Naive thymus-derived CD4-positive, alpha-beta T cell (primary cell): ENCODE measurements at regions of chr20 and their contacts with region 1.

Region 1: DNA sequence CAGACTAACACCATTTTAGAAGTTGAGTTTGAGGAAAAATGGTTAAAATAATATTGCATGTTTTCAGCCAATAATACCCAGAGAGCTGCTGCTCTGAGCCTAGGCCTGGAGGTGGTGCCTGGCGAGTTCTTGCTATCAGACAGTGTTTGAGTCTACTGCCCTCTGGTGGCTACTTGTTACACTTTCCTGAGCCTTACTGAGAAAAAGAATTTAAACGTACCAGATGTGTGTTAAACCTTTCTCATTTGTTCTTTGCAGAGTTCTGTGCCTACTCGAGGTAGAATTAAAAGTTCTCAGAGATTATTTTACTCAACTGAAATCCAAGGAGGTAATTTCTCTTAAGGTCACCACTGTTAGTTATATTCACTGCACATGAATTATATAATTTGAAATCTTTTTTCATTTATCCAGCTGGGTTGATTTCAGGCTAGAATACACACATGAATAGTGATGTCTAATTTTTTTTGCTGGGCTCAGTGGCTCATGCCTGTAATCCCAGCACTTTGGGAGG is 38.2 kb downstream of the SHLD1 start:
- DNase-seq: peak; percentile 21 to 88 (median 83)
- ATAC-seq: peak; percentile 100
- H3K4me3 ChIP-seq: no peak overlapping the region
- H3K4me3 Mint-ChIP-seq: no peak overlapping the region
- H3K27ac ChIP-seq: no peak overlapping the region
- H3K27ac Mint-ChIP-seq: peak overlapping the region in 6 of 9 donors; percentile 8 to 89 (median 68)
- H3K4me1 ChIP-seq: no peaks in the 10 kb centered on the region
- H3K4me1 Mint-ChIP-seq: peaks cover 0 to 22% (median 9%) of the 10 kb centered on the region in 7 donors
- H3K27me3 ChIP-seq: no peaks in the 10 kb centered on the region
- H3K27me3 Mint-ChIP-seq: no peaks in the 10 kb centered on the region

Region 2: GRCh38 chr20:5557123-5557522 is 231.3 kb before region 1 on chr20:
- CTCF ChIA-PET with region 1: interaction called, 26 read pairs
- POLR2A ChIA-PET with region 1: no interaction called
- intact Hi-C with region 1: loop called (anchors 1 kb)
- DNase-seq: peak in 8 of 9 donors; percentile 24 to 63 (median 41)
- ATAC-seq: peak; percentile 77
- H3K4me3 ChIP-seq: no peak overlapping the region
- H3K4me3 Mint-ChIP-seq: no peak overlapping the region
- H3K27ac ChIP-seq: peak overlapping the region; percentile 11
- H3K27ac Mint-ChIP-seq: peak overlapping the region; percentile 1 to 74 (median 25)
- H3K4me1 ChIP-seq: no peaks in the 10 kb centered on the region
- H3K4me1 Mint-ChIP-seq: peaks cover 2 to 35% (median 13%) of the 10 kb centered on the region in 7 donors
- H3K27me3 ChIP-seq: no peaks in the 10 kb centered on the region
- H3K27me3 Mint-ChIP-seq: no peaks in the 10 kb centered on the region

Region 3: DNA sequence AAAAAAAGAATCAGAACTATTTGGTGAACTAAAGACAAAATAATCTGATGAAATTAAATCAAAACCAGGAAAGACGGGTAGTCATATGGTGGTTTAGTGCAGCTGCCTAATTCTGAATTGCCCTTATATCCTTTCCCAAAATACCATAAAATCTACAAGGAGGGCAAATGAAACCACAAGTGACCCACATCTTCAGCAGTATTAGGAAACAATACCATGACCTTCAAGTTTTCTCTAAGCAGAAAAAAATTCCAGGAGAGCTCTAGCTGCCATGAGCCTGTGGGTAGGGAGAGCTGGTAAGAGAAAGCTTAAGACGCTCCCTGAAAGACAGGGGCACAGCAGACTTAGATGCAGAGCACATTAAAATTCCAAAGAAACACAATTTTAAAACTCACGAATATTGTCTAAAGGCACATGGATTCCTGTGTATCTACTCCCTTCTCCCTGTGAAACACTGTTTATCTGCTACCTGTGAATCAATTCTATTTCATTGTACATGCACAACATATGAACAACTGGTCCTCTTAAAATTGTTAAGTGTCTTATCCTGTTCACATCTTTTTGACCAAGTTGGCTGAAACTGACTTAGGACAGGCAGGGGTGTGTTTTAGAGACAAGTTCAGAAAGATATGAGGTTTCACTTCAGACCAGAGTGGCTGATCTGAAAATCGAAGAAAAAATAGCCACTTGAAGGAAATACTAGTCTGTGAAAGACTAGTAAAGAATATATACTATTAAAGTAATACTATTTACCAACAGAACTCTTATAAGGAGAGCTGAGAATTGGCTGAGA is 191.8 kb before region 1 on chr20:
- CTCF ChIA-PET with region 1: interaction called, 13 read pairs
- POLR2A ChIA-PET with region 1: interaction called, 3 read pairs
- intact Hi-C with region 1: no loop called
- DNase-seq: no peak
- ATAC-seq: no peak
- H3K4me3 ChIP-seq: no peak overlapping the region
- H3K4me3 Mint-ChIP-seq: peak overlapping the region in 9 of 10 donors; percentile 2 to 74 (median 29)
- H3K27ac ChIP-seq: peak overlapping the region; percentile 52
- H3K27ac Mint-ChIP-seq: peak overlapping the region; percentile 47 to 88 (median 77)
- H3K4me1 ChIP-seq: peaks cover 21 to 58% of the 10 kb centered on the region in 2 donors
- H3K4me1 Mint-ChIP-seq: peaks cover 38 to 76% (median 70%) of the 10 kb centered on the region in 7 donors
- H3K27me3 ChIP-seq: no peaks in the 10 kb centered on the region
- H3K27me3 Mint-ChIP-seq: no peaks in the 10 kb centered on the region

Region 4: GRCh38 chr20:5749952-5750779 is 38.3 kb before region 1 on chr20 and contains the start of gene SHLD1:
- CTCF ChIA-PET with region 1: interaction called, 4 read pairs
- POLR2A ChIA-PET with region 1: interaction called, 3 read pairs
- intact Hi-C with region 1: loop called in 1 of 2 experiments (anchors 2 kb)
- DNase-seq: peak; percentile 56 to 86 (median 80)
- ATAC-seq: peak; percentile 98
- H3K4me3 ChIP-seq: peak within 1 kb of the TSS; percentile 70
- H3K4me3 Mint-ChIP-seq: peak within 1 kb of the TSS; percentile 81 to 97 (median 92)
- H3K27ac ChIP-seq: peak within 1 kb of the TSS; percentile 79
- H3K27ac Mint-ChIP-seq: peak within 1 kb of the TSS; percentile 91 to 100 (median 94)
- H3K4me1 ChIP-seq: peaks cover 5 to 14% of the 10 kb centered on the region in 2 donors
- H3K4me1 Mint-ChIP-seq: peaks cover 15 to 38% (median 28%) of the 10 kb centered on the region in 7 donors
- H3K27me3 ChIP-seq: no peaks in the 10 kb centered on the region
- H3K27me3 Mint-ChIP-seq: peaks cover 0 to 4% (median 0%) of the 10 kb centered on the region in 5 donors
- total RNA-seq, gene SHLD1: 12.1 to 14.2 (median 13.2) TPM

Region 5: DNA sequence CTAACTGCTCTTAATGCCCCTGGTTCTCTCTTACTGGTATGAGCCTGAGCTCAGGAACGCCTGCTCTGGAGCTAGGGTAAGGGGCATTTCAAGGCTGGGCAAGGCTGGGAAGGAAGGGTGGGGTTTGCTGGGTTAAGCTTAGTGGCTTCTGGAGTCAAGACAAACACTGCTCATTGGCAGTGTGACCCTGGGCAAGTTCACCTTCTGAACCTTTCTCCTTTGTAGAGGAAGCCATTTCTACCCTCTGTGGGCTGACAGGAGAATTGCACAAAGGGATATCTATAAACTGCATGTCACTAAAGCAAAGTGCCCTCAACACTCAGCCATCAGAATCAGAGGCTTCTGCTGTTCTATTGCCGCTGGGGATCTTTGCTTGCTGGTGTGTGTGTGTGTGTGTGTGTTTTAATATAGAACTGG is 285.7 kb after region 1 on chr20:
- CTCF ChIA-PET with region 1: no interaction called
- POLR2A ChIA-PET with region 1: no interaction called
- intact Hi-C with region 1: loop called (anchors 1 to 10 kb)
- DNase-seq: peak in 3 of 9 donors; percentile 27 to 34 (median 30)
- ATAC-seq: peak; percentile 41
- H3K4me3 ChIP-seq: no peak overlapping the region
- H3K4me3 Mint-ChIP-seq: no peak overlapping the region
- H3K27ac ChIP-seq: no peak overlapping the region
- H3K27ac Mint-ChIP-seq: peak overlapping the region in 2 of 9 donors; percentile 2 to 59
- H3K4me1 ChIP-seq: no peaks in the 10 kb centered on the region
- H3K4me1 Mint-ChIP-seq: peaks cover 0 to 7% (median 3%) of the 10 kb centered on the region in 7 donors
- H3K27me3 ChIP-seq: no peaks in the 10 kb centered on the region
- H3K27me3 Mint-ChIP-seq: peaks cover 0 to 2% (median 0%) of the 10 kb centered on the region in 5 donors

Region 6: DNA sequence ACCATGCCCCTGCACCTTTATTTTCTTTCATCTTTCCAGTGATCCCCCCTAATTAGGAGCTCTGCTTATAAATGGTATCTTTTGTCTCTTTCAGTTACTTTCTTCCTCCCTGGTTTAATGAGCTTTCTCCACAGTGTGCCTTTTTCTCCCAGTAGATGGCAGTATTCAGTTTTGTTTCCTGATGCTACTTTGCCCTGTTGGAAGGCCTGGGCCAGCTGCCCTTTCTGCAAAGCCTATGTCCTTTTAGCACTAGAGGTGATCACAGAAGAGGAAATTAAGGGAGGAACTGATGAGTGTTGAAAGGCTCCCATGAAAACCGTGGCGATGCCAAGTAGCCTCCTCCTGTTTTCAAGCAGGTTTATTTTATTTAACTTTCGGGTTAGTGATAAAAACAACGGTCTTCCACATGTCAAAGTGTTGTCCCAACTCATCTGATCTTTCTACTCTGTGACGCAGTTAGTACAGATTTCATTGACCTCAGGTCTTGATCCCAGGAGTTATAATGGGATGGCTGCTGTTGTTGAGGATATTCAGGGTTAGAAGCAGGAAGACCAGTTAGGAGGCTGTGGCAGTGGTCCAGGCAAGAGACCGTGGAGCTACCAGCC is 794.8 kb after region 1 on chr20:
- CTCF ChIA-PET with region 1: no interaction called
- POLR2A ChIA-PET with region 1: no interaction called
- intact Hi-C with region 1: no loop called
- DNase-seq: no peak
- ATAC-seq: no peak
- H3K4me3 ChIP-seq: no peak overlapping the region
- H3K4me3 Mint-ChIP-seq: no peak overlapping the region
- H3K27ac ChIP-seq: no peak overlapping the region
- H3K27ac Mint-ChIP-seq: no peak overlapping the region
- H3K4me1 ChIP-seq: no peaks in the 10 kb centered on the region
- H3K4me1 Mint-ChIP-seq: no peaks in the 10 kb centered on the region
- H3K27me3 ChIP-seq: no peaks in the 10 kb centered on the region
- H3K27me3 Mint-ChIP-seq: peaks cover 0 to 15% (median 0%) of the 10 kb centered on the region in 5 donors